Dorsolateral prefrontal cortex (tissue), 120 donors: ENCODE measurements at regions of chr20 and their contacts with region 1.

Region 1: GRCh38 chr20:62065669-62066338 is at the start of gene TAF4:
- DNase-seq: peak in 9 of 10 donors; percentile 44 to 81 (median 75)
- H3K4me3 ChIP-seq: peak within 1 kb of the TSS; percentile 47 to 86 (median 72)
- H3K27ac ChIP-seq: peak within 1 kb of the TSS in 58 of 59 donors; percentile 33 to 94 (median 85)
- H3K27me3 ChIP-seq: no peaks in the 10 kb centered on the region
- CTCF ChIP-seq: no peak
- total RNA-seq, gene TAF4: 13.3 to 38.0 (median 22.2) TPM

Region 2: GRCh38 chr20:61404303-61404702 is 661.5 kb before region 1 on chr20:
- intact Hi-C with region 1: no loop called
- DNase-seq: no peak
- H3K4me3 ChIP-seq: no peak overlapping the region
- H3K27ac ChIP-seq: no peak overlapping the region
- H3K27me3 ChIP-seq: no peaks in the 10 kb centered on the region
- CTCF ChIP-seq: no peak

Region 3: GRCh38 chr20:62002882-62003480 is 62.8 kb before region 1 on chr20:
- intact Hi-C with region 1: loop called in 1 of 2 experiments (anchors 5 kb)
- DNase-seq: no peak
- H3K4me3 ChIP-seq: no peak overlapping the region
- H3K27ac ChIP-seq: no peak overlapping the region
- H3K27me3 ChIP-seq: no peaks in the 10 kb centered on the region
- CTCF ChIP-seq: no peak

Region 4: GRCh38 chr20:62010551-62011402 is 55.0 kb before region 1 on chr20:
- intact Hi-C with region 1: loop called (anchors 2 to 5 kb)
- DNase-seq: peak in 8 of 10 donors; percentile 48 to 69 (median 65)
- H3K4me3 ChIP-seq: peak overlapping the region in 1 of 59 donors; percentile 8
- H3K27ac ChIP-seq: no peak overlapping the region
- H3K27me3 ChIP-seq: no peaks in the 10 kb centered on the region
- CTCF ChIP-seq: peak; percentile 44 to 88 (median 76)

Region 5: DNA sequence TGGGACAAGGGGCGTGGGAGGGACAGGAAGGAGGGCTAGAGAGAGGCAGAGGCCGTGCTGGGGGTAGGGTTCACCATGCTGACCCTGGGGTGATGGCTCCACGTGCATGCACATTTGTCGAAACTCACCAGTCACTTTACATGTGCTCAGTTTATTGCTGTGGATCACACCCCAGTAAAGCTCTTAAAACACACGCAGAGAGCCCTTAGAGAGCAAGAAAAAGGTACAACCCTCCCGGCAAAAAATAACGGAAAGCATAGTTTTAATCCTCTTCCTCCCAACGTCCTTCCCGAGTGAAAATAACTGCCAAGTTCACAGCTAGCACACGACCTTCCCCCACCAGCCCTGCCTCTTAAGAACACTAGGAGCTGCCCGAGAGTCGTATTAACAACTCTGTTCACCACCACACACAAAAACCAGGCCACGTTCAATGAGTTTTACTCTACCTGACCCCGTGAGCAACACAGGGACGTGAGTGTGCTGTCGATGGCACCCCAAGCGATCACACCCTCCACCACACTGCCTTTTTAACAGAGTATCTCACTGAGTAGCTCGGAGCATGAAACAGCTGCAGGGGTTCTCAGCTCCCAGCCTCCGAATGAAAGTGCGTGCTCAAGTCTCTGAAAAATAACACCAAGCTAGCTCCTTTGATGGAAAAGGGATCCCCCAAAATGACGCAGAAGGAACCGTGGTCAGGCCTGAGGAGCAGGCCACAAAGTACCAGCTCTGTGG is 39.8 kb before region 1 on chr20:
- intact Hi-C with region 1: loop called in 1 of 2 experiments (anchors 5 kb)
- DNase-seq: peak in 3 of 10 donors; percentile 27 to 34 (median 32)
- H3K4me3 ChIP-seq: peak overlapping the region in 5 of 59 donors; percentile 2 to 22 (median 7)
- H3K27ac ChIP-seq: peak overlapping the region in 31 of 59 donors; percentile 1 to 70 (median 28)
- H3K27me3 ChIP-seq: no peaks in the 10 kb centered on the region
- CTCF ChIP-seq: peak in 41 of 56 donors; percentile 12 to 59 (median 31)

Region 6: GRCh38 chr20:62121776-62122631 is 56.2 kb after region 1 on chr20 and contains the start of gene LSM14B:
- intact Hi-C with region 1: loop called (anchors 1 to 2 kb)
- DNase-seq: peak; percentile 82 to 97 (median 92)
- H3K4me3 ChIP-seq: peak within 1 kb of the TSS; percentile 61 to 97 (median 84)
- H3K27ac ChIP-seq: peak within 1 kb of the TSS; percentile 13 to 98 (median 93)
- H3K27me3 ChIP-seq: peaks cover 0 to 9% (median 0%) of the 10 kb centered on the region in 45 donors
- CTCF ChIP-seq: peak in 6 of 56 donors; percentile 7 to 29 (median 12)
- total RNA-seq, gene LSM14B: 50.8 to 92.9 (median 73.1) TPM

Region 7: GRCh38 chr20:62143118-62143973 is 77.5 kb after region 1 on chr20 and contains the starts of genes PSMA7 and SS18L1:
- intact Hi-C with region 1: loop called (anchors 1 to 2 kb)
- DNase-seq: peak; percentile 66 to 93 (median 84)
- H3K4me3 ChIP-seq: peak within 1 kb of the TSS; percentile 61 to 98 (median 86)
- H3K27ac ChIP-seq: peak within 1 kb of the TSS in 58 of 59 donors; percentile 57 to 100 (median 94)
- H3K27me3 ChIP-seq: no peaks in the 10 kb centered on the region
- CTCF ChIP-seq: peak in 3 of 56 donors; percentile 12 to 29 (median 13)
- total RNA-seq, gene PSMA7: 92.8 to 154 (median 124) TPM
- total RNA-seq, gene SS18L1: 23.7 to 55.2 (median 35.7) TPM

Region 8: DNA sequence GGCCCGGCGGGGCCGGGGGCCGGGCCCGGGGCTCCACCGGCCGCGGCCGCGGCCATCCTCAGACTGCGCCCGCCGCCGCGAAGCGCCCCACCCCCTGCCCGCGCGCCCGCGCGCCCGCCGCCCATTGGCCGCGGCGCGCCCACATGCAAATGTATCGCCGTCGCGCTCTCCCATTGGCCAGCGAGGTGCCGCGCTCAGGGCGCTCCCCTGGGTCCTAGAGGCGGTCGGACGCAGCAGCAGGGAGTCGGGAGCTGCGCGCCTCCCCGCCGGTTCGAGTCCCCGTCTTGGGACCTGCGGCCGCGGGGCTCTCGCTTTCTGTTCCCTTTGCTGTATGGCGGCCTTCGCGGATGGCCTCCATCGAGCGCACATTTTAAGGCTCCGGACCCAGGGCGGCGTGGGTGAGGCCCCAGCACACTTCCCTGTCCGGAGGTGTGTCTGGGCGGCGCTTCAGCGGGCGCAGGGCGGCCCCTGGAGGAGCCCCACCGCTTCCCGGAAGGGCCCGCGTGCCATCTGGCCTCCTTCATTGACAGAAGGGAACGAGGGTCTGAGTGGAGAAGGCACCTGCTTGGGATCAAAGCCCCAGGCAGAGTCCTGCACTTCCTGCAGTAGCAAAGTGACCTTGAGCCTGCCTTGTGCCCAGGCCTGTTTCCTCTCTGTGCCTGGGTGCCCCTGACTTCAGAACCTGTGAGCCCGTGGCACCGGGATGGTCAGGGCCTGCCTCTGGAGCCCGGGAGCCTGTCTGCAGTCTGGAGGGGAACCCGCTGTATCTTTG is 341.6 kb after region 1 on chr20 and contains the start of gene CABLES2:
- intact Hi-C with region 1: loop called in 1 of 2 experiments (anchors 5 kb)
- DNase-seq: peak; percentile 91 to 97 (median 94)
- H3K4me3 ChIP-seq: peak within 1 kb of the TSS; percentile 52 to 85 (median 71)
- H3K27ac ChIP-seq: peak within 1 kb of the TSS in 21 of 59 donors; percentile 2 to 84 (median 35)
- H3K27me3 ChIP-seq: no peaks in the 10 kb centered on the region
- CTCF ChIP-seq: peak in 42 of 56 donors; percentile 6 to 60 (median 35)
- total RNA-seq, gene CABLES2: 7.0 to 18.7 (median 11.9) TPM